Activated B cell treated with CpG ODN at 0.5 μM for 24 hours (primary cell): ENCODE measurements at regions of chr18 and their contacts with region 1.

Region 1: GRCh38 chr18:31819106-31819924 is 58.6 kb upstream of the SLC25A52 start:
- DNase-seq: no peak
- ATAC-seq: no peak
- H3K4me3 Mint-ChIP-seq: no peak overlapping the region
- H3K27ac Mint-ChIP-seq: no peak overlapping the region
- H3K4me1 Mint-ChIP-seq: no peaks in the 10 kb centered on the region
- H3K27me3 Mint-ChIP-seq: no peaks in the 10 kb centered on the region
- CTCF ChIP-seq: no peak

Region 2: GRCh38 chr18:31555971-31556747 is 263.2 kb before region 1 on chr18:
- CTCF ChIA-PET with region 1: no interaction called
- POLR2A ChIA-PET with region 1: no interaction called
- intact Hi-C with region 1: loop called (anchors 1 kb)
- DNase-seq: no peak
- ATAC-seq: peak; percentile 40
- H3K4me3 Mint-ChIP-seq: no peak overlapping the region
- H3K27ac Mint-ChIP-seq: no peak overlapping the region
- H3K4me1 Mint-ChIP-seq: no peaks in the 10 kb centered on the region
- H3K27me3 Mint-ChIP-seq: peaks cover 4% of the 10 kb centered on the region
- CTCF ChIP-seq: peak; percentile 31

Region 3: GRCh38 chr18:31685097-31686082 is 133.9 kb before region 1 on chr18:
- CTCF ChIA-PET with region 1: no interaction called
- POLR2A ChIA-PET with region 1: no interaction called
- intact Hi-C with region 1: loop called (anchors 10 kb)
- DNase-seq: peak; percentile 56
- ATAC-seq: peak; percentile 80
- H3K4me3 Mint-ChIP-seq: peak overlapping the region; percentile 82
- H3K27ac Mint-ChIP-seq: peak overlapping the region; percentile 56
- H3K4me1 Mint-ChIP-seq: peaks cover 17% of the 10 kb centered on the region
- H3K27me3 Mint-ChIP-seq: peaks cover 21% of the 10 kb centered on the region
- CTCF ChIP-seq: no peak